Endothelial cell of umbilical vein (primary cell): ENCODE measurements at regions of chr12 and their contacts with region 1.

Region 1: GRCh38 chr12:41497409-41497808 is 309.3 kb downstream of the PDZRN4 start:
- DNase-seq: no peak
- H3K4me3 ChIP-seq: no peak overlapping the region
- H3K27ac ChIP-seq: no peak overlapping the region
- H3K4me1 ChIP-seq: no peaks in the 10 kb centered on the region
- H3K27me3 ChIP-seq: no peaks in the 10 kb centered on the region
- CTCF ChIP-seq: no peak
- POLR2A ChIP-seq: no peak

Region 2: GRCh38 chr12:41515953-41516352 is 18.5 kb after region 1 on chr12:
- CTCF ChIA-PET with region 1: no interaction called
- POLR2A ChIA-PET with region 1: no interaction called
- dilution Hi-C with region 1: no loop called
- intact Hi-C with region 1: loop called (anchors 2 kb)
- DNase-seq: no peak
- H3K4me3 ChIP-seq: no peak overlapping the region
- H3K27ac ChIP-seq: no peak overlapping the region
- H3K4me1 ChIP-seq: peaks cover 11% of the 10 kb centered on the region
- H3K27me3 ChIP-seq: no peaks in the 10 kb centered on the region
- CTCF ChIP-seq: no peak
- POLR2A ChIP-seq: no peak